ENCODE measurements at regions of chr6 and their contacts with region 1.

Region 1: DNA sequence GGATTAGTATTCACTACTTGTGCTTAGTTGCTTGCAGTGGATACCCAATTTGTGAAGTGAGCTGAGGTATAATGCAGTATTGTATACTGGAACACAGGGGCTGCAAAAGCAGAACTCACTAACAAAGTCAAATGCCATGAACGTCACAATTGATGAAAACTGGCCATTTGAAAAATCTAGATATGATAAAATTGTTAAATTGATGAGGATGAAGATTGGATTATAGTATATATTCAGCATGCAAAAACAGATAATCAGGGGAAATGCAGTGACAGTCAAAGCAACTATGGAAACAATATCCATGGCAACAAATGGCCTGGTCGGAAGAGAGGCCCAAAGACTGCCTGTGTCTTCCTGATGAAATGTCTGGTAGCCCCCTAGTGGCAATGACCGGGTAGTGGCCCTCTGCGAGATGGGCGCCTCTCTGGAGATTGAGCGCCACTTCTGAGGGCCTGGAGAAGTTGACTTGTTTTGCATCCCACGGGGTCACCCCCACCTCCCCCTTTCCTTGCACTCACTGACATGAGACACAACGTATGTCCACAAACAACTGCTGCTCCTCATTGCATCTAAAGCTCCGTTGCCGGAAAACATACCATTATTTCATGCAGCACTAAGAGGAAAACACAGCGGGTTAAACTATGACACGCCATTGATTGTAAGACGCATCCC is 43.6 kb downstream of the C6orf15 start:
- DNase-seq: peak; percentile 81
- H3K4me3 Mint-ChIP-seq: no peak overlapping the region
- H3K27ac Mint-ChIP-seq: no peak overlapping the region
- H3K4me1 Mint-ChIP-seq: no peaks in the 10 kb centered on the region
- H3K27me3 Mint-ChIP-seq: no peaks in the 10 kb centered on the region

Region 2: DNA sequence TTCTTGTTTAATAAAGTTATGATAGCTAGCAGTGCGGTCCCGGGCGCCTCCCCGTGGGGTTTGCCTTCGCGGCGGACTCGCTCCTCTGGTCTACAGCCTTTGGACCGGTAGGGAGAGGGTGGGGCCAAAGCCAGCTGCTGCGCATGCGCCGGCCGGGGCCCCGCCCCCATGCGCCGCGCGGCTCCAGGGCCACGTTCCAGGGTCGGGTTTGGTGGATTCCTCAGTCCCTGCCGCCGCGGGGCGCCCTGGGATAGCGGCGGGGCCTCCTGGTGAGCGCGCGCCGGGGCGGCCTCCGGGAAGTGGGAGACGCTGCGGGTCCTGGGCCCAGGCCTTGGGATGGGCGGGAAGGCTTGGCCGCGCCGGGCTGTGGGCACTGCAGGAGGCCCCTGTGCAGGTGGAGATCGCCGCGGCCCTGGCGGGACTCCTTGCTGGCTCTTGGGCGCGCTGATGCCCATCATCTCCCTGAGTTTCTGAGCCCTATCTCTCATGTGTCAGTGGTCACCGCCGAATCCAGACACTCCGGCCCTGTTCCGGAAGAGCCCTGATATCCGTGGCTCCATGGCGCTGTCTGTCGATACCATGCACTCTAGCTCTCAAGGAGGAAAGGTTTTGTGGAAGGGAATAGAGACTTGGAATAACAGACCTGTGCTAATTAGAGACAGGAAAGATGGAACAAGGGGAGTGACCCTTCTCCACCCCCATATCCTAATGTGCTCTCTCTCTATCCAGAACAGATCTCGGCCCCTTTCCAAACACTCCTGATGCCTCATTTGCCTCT is 154.5 kb before region 1 on chr6 and contains the start of gene VARS2:
- CTCF ChIA-PET with region 1: interaction called, 54 read pairs
- POLR2A ChIA-PET with region 1: interaction called, 4 read pairs
- intact Hi-C with region 1: loop called (anchors 1 kb)
- DNase-seq: peak; percentile 93
- H3K4me3 Mint-ChIP-seq: peak within 1 kb of the TSS; percentile 94
- H3K27ac Mint-ChIP-seq: peak within 1 kb of the TSS; percentile 82
- H3K4me1 Mint-ChIP-seq: peaks cover 29% of the 10 kb centered on the region
- H3K27me3 Mint-ChIP-seq: no peaks in the 10 kb centered on the region
- total RNA-seq, gene VARS2: 56.9 to 68.9 TPM

Region 3: GRCh38 chr6:31103136-31103535 is 34.3 kb after region 1 on chr6:
- CTCF ChIA-PET with region 1: no interaction called
- POLR2A ChIA-PET with region 1: no interaction called
- intact Hi-C with region 1: no loop called
- DNase-seq: no peak
- H3K4me3 Mint-ChIP-seq: no peak overlapping the region
- H3K27ac Mint-ChIP-seq: no peak overlapping the region
- H3K4me1 Mint-ChIP-seq: peaks cover 2% of the 10 kb centered on the region
- H3K27me3 Mint-ChIP-seq: no peaks in the 10 kb centered on the region

Region 4: DNA sequence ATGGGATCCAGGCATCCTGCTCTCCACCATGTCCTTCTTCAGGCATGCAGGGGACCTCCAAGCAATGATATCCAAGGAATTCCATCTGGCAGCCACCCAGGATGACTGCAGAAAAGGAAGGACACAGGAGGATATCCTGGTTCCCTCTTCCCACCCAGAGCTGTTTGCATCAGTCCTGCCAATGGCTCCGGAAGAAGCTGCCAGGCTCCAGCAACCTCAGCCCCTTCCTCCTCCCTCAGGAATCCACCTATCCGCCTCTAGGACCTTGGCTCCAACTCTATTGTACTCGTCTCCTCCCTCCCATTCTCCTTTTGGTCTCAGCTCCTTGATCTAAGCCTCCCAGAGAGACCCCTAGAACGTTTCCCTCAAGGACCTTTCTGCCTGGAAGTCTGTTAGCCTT is 70.8 kb after region 1 on chr6:
- CTCF ChIA-PET with region 1: no interaction called
- POLR2A ChIA-PET with region 1: no interaction called
- intact Hi-C with region 1: no loop called
- DNase-seq: no peak
- H3K4me3 Mint-ChIP-seq: no peak overlapping the region
- H3K27ac Mint-ChIP-seq: no peak overlapping the region
- H3K4me1 Mint-ChIP-seq: peaks cover 3% of the 10 kb centered on the region
- H3K27me3 Mint-ChIP-seq: no peaks in the 10 kb centered on the region

Region 5: GRCh38 chr6:31175971-31176370 is 107.2 kb after region 1 on chr6:
- CTCF ChIA-PET with region 1: no interaction called
- POLR2A ChIA-PET with region 1: no interaction called
- intact Hi-C with region 1: no loop called
- DNase-seq: no peak
- H3K4me3 Mint-ChIP-seq: no peak overlapping the region
- H3K27ac Mint-ChIP-seq: no peak overlapping the region
- H3K4me1 Mint-ChIP-seq: peaks cover 17% of the 10 kb centered on the region
- H3K27me3 Mint-ChIP-seq: no peaks in the 10 kb centered on the region